Posterior cingulate gyrus (tissue), 11 donors: ENCODE measurements at regions of chr5 and their contacts with region 1.

Region 1: DNA sequence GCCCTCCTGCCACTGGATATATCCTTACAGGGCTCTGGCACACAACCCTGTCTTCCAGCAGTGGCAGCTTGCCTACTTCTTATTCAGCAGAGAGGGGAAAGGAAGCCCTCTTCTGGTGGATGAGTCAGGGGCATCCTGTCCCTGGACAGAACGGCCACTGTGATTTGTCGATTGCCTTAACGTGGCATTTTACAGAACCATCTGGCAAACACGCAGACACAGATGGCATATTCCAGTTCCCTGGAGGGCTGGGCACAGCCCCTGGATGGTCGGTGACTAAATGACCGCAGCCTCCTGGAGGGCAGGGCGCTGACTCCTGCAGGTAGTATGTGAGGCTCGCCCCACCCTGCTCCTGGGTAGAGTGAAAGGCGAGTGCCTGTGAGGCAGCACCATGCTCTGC is 62.1 kb downstream of the DCP2 start:
- DNase-seq: no peak

Region 2: GRCh38 chr5:113020461-113021273 is 18.0 kb before region 1 on chr5:
- intact Hi-C with region 1: loop called (anchors 1 kb)
- DNase-seq: no peak